K562 (cell line): ENCODE measurements at regions of chr22 and their contacts with region 1.

Region 1: GRCh38 chr22:50525390-50526068 is at the start of gene SCO2:
- DNase-seq: peak; percentile 92 to 97 (median 94)
- ATAC-seq: peak; percentile 80
- H3K4me3 ChIP-seq: peak within 1 kb of the TSS; percentile 71
- H3K27ac ChIP-seq: peak within 1 kb of the TSS; percentile 89
- H3K4me1 ChIP-seq: peaks cover 8 to 67% of the 10 kb centered on the region in 2 experiments; a peak in 4 of 5 replicates
- H3K27me3 ChIP-seq: no peaks in the 10 kb centered on the region
- CTCF ChIP-seq: peak; percentile 45 to 60 (median 48); a peak in 5 of 6 replicates
- EP300 ChIP-seq: no peak
- POLR2A ChIP-seq: peak; percentile 88
- RAD21 ChIP-seq: no peak
- polyA plus RNA-seq, gene SCO2: not detected

Region 2: GRCh38 chr22:50507991-50508884 is 17.3 kb before region 1 on chr22 and contains the start of gene NCAPH2:
- CTCF ChIA-PET with region 1: no interaction called
- POLR2A ChIA-PET with region 1: interaction called, 65 read pairs
- in situ Hi-C with region 1: no loop called
- intact Hi-C with region 1: no loop called
- DNase-seq: peak; percentile 72 to 97 (median 86)
- ATAC-seq: peak; percentile 81
- H3K4me3 ChIP-seq: peak within 1 kb of the TSS; percentile 87
- H3K27ac ChIP-seq: peak within 1 kb of the TSS; percentile 98
- H3K4me1 ChIP-seq: peaks cover 0 to 31% of the 10 kb centered on the region in 2 experiments; a peak in 3 of 5 replicates
- H3K27me3 ChIP-seq: no peaks in the 10 kb centered on the region
- CTCF ChIP-seq: peak in 2 of 3 experiments; percentile 1 to 10; a peak in 1 of 6 replicates
- EP300 ChIP-seq: no peak
- POLR2A ChIP-seq: peak; percentile 86
- RAD21 ChIP-seq: no peak
- polyA plus RNA-seq, gene NCAPH2: 3.6 to 10.0 TPM

Region 3: GRCh38 chr22:50544078-50544745 is 18.7 kb after region 1 on chr22:
- CTCF ChIA-PET with region 1: no interaction called
- POLR2A ChIA-PET with region 1: interaction called, 10 read pairs
- in situ Hi-C with region 1: no loop called
- intact Hi-C with region 1: no loop called
- DNase-seq: no peak
- ATAC-seq: no peak
- H3K4me3 ChIP-seq: no peak overlapping the region
- H3K27ac ChIP-seq: no peak overlapping the region
- H3K4me1 ChIP-seq: peaks cover 12 to 38% of the 10 kb centered on the region in 2 experiments
- H3K27me3 ChIP-seq: no peaks in the 10 kb centered on the region
- CTCF ChIP-seq: no peak
- EP300 ChIP-seq: no peak
- POLR2A ChIP-seq: no peak
- RAD21 ChIP-seq: no peak

Region 4: GRCh38 chr22:50562523-50563412 is 37.2 kb after region 1 on chr22 and contains the start of gene SYCE3:
- CTCF ChIA-PET with region 1: no interaction called
- POLR2A ChIA-PET with region 1: interaction called, 7 read pairs
- in situ Hi-C with region 1: loop called (anchors 5 kb)
- intact Hi-C with region 1: loop called (anchors 5 kb)
- DNase-seq: peak; percentile 92 to 96 (median 93)
- ATAC-seq: peak; percentile 98
- H3K4me3 ChIP-seq: peak within 1 kb of the TSS; percentile 57
- H3K27ac ChIP-seq: peak within 1 kb of the TSS; percentile 39; the same call in 1 of the 3 replicates
- H3K4me1 ChIP-seq: peaks cover 0 to 13% of the 10 kb centered on the region in 2 experiments; a peak in 1 of 5 replicates
- H3K27me3 ChIP-seq: no peaks in the 10 kb centered on the region
- CTCF ChIP-seq: peak; percentile 80 to 88 (median 85)
- EP300 ChIP-seq: no peak
- POLR2A ChIP-seq: peak; percentile 61
- RAD21 ChIP-seq: peak; percentile 49 to 56
- polyA plus RNA-seq, gene SYCE3: 0.56 TPM in 1 of 2 experiments, not detected in the other

Region 5: GRCh38 chr22:50568599-50569001 is 43.1 kb after region 1 on chr22:
- CTCF ChIA-PET with region 1: no interaction called
- POLR2A ChIA-PET with region 1: interaction called, 3 read pairs
- in situ Hi-C with region 1: loop called (anchors 5 kb)
- intact Hi-C with region 1: loop called (anchors 5 kb)
- DNase-seq: peak in 1 of 4 experiments; percentile 29
- ATAC-seq: no peak
- H3K4me3 ChIP-seq: no peak overlapping the region
- H3K27ac ChIP-seq: no peak overlapping the region
- H3K4me1 ChIP-seq: peaks cover 0 to 11% of the 10 kb centered on the region in 2 experiments; a peak in 3 of 5 replicates
- H3K27me3 ChIP-seq: no peaks in the 10 kb centered on the region
- CTCF ChIP-seq: no peak
- EP300 ChIP-seq: no peak
- POLR2A ChIP-seq: no peak
- RAD21 ChIP-seq: no peak